ENCODE measurements at regions of chr4 and their contacts with region 1.

Region 1: GRCh38 chr4:8468746-8469535 is 28.4 kb downstream of the TRMT44 start:
- DNase-seq: peak; percentile 89
- H3K4me3 ChIP-seq: peak overlapping the region in 1 of 2 experiments; percentile 41; a peak in 1 of 4 replicates
- H3K27ac ChIP-seq: no peak overlapping the region
- H3K4me1 ChIP-seq: no peaks in the 10 kb centered on the region
- H3K27me3 ChIP-seq: no peaks in the 10 kb centered on the region
- CTCF ChIP-seq: peak; percentile 93
- EP300 ChIP-seq: no peak
- RAD21 ChIP-seq: peak; percentile 83

Region 2: GRCh38 chr4:8478801-8479744 is 10.1 kb after region 1 on chr4:
- CTCF ChIA-PET with region 1: interaction called, 16 read pairs
- POLR2A ChIA-PET with region 1: no interaction called
- DNase-seq: no peak
- H3K4me3 ChIP-seq: no peak overlapping the region
- H3K27ac ChIP-seq: no peak overlapping the region
- H3K4me1 ChIP-seq: no peaks in the 10 kb centered on the region
- H3K27me3 ChIP-seq: peaks cover 5% of the 10 kb centered on the region; the same call in 1 of the 2 replicates
- CTCF ChIP-seq: no peak
- EP300 ChIP-seq: no peak
- RAD21 ChIP-seq: no peak

Region 3: DNA sequence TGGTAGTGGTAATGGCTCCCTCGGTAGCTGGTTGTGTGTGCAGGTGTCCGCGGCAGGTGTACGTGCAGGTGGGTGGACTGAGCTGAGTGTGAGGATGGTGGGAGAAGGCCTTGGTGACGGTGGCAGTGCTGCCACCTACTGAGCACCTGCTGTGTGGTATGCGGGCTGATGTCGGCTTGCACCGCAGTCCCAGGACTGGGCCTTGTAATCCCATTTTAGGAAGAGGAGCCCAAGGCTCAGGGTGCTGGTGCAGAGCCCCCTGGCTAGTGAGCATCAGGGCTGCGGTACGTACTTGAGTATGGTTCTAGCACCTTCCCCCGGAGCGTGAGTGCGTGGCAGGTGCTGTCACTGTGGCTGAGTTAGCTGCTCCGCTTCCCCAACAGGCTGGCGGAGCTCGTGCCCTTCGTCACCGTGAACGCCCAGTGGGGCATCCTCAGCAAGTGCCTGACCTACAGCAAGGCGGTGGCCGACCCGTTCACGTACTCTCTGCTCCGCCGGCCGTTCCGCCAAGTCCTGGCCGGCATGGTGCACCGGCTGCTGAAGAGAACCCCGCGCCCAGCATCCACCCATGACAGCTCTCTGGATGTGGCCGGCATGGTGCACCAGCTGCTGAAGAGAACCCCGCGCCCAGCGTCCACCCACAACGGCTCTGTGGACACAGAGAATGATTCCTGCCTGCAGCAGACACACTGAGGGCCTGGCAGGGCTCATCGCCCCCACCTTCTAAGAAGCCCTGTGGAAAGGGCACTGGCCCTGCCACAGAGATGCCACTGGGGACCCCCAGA is 117.9 kb after region 1 on chr4:
- CTCF ChIA-PET with region 1: interaction called, 54 read pairs
- POLR2A ChIA-PET with region 1: no interaction called
- DNase-seq: no peak
- H3K4me3 ChIP-seq: no peak overlapping the region
- H3K27ac ChIP-seq: no peak overlapping the region
- H3K4me1 ChIP-seq: peaks cover 0 to 13% of the 10 kb centered on the region in 2 experiments; a peak in 1 of 4 replicates
- H3K27me3 ChIP-seq: no peaks in the 10 kb centered on the region; the same call in 1 of the 2 replicates
- CTCF ChIP-seq: no peak
- EP300 ChIP-seq: no peak
- RAD21 ChIP-seq: no peak

Region 4: GRCh38 chr4:8599657-8600056 is 130.7 kb after region 1 on chr4:
- CTCF ChIA-PET with region 1: interaction called, 54 read pairs
- POLR2A ChIA-PET with region 1: no interaction called
- DNase-seq: no peak
- H3K4me3 ChIP-seq: no peak overlapping the region
- H3K27ac ChIP-seq: no peak overlapping the region
- H3K4me1 ChIP-seq: peaks cover 0 to 30% of the 10 kb centered on the region in 2 experiments; a peak in 1 of 4 replicates
- H3K27me3 ChIP-seq: no peaks in the 10 kb centered on the region
- CTCF ChIP-seq: no peak
- EP300 ChIP-seq: no peak
- RAD21 ChIP-seq: no peak

Measured in SK-N-SH (cell line).